Prostate gland (tissue), 2 donors: ENCODE measurements at regions of chr7 and their contacts with region 1.

Region 1: DNA sequence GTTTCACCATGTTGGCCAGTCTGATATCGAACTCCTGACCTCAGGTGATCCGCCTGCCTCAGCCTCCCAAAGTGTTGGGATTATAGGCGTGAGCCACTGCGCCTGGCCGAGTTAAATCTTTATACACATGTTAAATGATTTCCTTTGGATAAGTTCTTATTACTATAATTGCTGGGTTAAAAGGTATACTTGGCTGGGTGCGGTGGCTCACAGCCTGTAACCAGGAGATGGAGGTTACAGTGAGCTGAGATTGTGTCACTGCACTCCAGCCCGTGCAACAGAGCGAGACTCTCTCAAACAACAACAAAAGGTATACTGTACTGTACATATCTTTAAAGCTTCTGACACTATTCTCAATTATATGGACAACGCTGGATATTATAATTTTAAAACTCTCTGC is 53.2 kb upstream of the CDK13 start:
- DNase-seq: no peak
- H3K4me3 ChIP-seq: no peak overlapping the region
- H3K27ac ChIP-seq: no peak overlapping the region
- H3K4me1 ChIP-seq: no peaks in the 10 kb centered on the region
- H3K27me3 ChIP-seq: peaks cover 3% of the 10 kb centered on the region
- CTCF ChIP-seq: no peak
- POLR2A ChIP-seq: no peak

Region 2: DNA sequence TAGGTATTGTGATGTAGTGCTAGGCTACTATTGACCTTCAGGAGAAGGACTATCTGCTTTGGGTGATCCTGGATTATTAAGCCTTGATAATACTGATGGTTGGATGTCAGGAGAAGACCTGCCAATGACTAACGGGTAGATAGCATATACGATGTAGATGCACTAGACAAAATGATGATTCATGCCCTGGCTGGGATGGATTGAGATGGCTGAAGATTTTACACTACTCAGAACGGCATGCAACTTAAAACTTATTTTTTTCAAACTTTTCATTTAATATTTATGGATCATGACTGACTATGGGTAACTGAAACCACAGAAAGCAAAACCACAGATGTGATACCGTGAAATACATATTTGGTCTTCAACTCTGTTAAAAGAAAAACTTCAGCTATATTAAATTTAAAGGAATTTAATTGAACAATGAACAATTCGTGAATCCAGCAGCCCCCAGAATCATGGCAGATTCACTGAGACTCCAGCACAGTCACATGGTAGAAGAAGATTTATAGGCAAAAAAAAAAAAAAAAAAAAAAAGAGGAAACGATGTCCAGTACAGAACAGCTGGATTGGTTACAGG is 71.3 kb before region 1 on chr7:
- intact Hi-C with region 1: no loop called
- DNase-seq: no peak
- H3K4me3 ChIP-seq: no peak overlapping the region
- H3K27ac ChIP-seq: no peak overlapping the region
- H3K4me1 ChIP-seq: no peaks in the 10 kb centered on the region
- H3K27me3 ChIP-seq: no peaks in the 10 kb centered on the region
- CTCF ChIP-seq: no peak
- POLR2A ChIP-seq: no peak

Region 3: GRCh38 chr7:40047661-40048060 is 150.8 kb after region 1 on chr7:
- intact Hi-C with region 1: loop called (anchors 2 kb)
- DNase-seq: no peak
- H3K4me3 ChIP-seq: no peak overlapping the region
- H3K27ac ChIP-seq: no peak overlapping the region
- H3K4me1 ChIP-seq: no peaks in the 10 kb centered on the region
- H3K27me3 ChIP-seq: no peaks in the 10 kb centered on the region
- CTCF ChIP-seq: no peak
- POLR2A ChIP-seq: no peak